ENCODE measurements at regions of chrX and their contacts with region 1.

Region 1: DNA sequence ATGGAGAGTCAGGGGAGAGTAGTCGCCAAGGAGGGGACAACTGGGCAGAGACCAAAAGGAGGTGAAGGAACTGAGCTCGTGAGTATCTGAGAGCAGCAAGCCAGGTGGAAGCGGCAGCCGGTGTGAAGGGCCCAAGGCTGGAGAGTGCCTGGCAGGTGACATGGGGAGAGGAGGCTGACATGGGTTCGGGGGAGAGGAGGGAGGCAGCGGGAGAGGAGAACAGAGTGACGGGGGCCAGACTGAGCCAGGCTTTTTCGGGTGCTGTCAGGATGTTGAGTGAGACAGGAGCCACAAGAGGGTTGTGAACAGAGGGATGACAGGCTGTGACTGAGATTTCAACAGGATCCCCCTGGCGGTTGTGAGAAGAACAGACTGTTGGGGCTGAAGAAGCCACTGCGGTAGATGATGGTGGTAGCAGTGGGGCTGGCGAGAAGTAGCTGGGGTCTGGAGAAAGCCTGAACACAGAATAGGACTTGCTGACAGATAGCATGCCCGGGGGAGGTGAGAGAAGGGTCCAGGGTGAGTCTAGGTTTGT is 5.7 kb downstream of the ELK1 start:
- DNase-seq: no peak
- H3K4me3 ChIP-seq: no peak overlapping the region
- H3K27ac ChIP-seq: no peak overlapping the region
- H3K4me1 ChIP-seq: no peaks in the 10 kb centered on the region
- H3K27me3 ChIP-seq: no peaks in the 10 kb centered on the region
- CTCF ChIP-seq: peak; percentile 24

Region 2: DNA sequence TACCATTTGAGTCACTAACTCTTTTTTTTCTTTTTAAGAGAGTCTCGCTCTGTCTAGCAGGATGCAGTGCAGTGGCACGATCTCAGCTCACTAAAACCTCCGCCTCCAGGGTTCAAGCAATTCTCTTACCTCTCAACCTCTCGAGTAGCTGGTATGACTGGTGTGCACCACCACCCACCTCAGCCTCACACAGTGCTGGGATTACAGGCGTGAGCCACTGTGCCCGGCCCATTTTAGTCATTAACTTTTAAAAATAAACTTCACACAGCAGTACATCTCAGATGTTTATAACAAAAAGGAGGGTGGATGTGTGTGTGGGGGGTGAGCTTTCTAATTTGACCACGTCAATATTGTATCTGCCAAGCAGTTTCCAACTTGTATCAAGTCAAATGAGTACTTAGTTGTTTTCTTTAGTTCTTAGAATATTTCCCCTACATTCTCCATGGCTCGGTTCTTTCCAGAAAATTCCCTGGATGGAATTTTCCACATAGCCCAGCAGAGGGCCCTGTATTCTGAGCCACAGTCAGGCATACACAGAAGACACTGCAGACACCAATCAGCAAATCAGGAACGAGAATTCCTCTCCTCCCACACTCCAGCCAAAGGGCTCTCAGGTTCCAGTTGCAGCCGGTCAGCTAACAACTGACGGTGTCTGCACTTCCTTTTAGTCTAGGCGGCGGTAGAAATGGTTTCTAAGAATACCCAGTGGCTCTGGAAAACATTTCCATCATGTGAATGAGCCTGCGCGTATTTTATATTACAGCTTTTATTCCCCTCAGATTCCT is 103.7 kb before region 1 on chrX:
- intact Hi-C with region 1: loop called (anchors 5 kb)
- DNase-seq: peak; percentile 79
- H3K4me3 ChIP-seq: no peak overlapping the region
- H3K27ac ChIP-seq: peak overlapping the region; percentile 27
- H3K4me1 ChIP-seq: no peaks in the 10 kb centered on the region
- H3K27me3 ChIP-seq: no peaks in the 10 kb centered on the region
- CTCF ChIP-seq: peak; percentile 44

Region 3: GRCh38 chrX:47976254-47977151 is 331.9 kb after region 1 on chrX:
- intact Hi-C with region 1: no loop called
- DNase-seq: no peak
- H3K4me3 ChIP-seq: no peak overlapping the region
- H3K27ac ChIP-seq: no peak overlapping the region
- H3K4me1 ChIP-seq: no peaks in the 10 kb centered on the region
- H3K27me3 ChIP-seq: no peaks in the 10 kb centered on the region
- CTCF ChIP-seq: no peak

Measured in colonic mucosa (tissue), 4 donors.